Activated CD4-positive, alpha-beta T cell treated with anti-CD3 and anti-CD28 coated beads, Interleukin-2, amount 10 ng/mL, durations not matched to agents 24 days and 14 days (primary cell): ENCODE measurements at regions of chr4 and their contacts with region 1.

Region 1: GRCh38 chr4:77819843-77820648 is 878 bp upstream of the CNOT6L start:
- DNase-seq: peak; percentile 98
- H3K4me3 Mint-ChIP-seq: peak overlapping the region; percentile 97
- H3K27ac Mint-ChIP-seq: peak overlapping the region; percentile 100
- H3K4me1 Mint-ChIP-seq: peaks cover 38% of the 10 kb centered on the region
- H3K27me3 Mint-ChIP-seq: peaks cover 1% of the 10 kb centered on the region

Region 2: GRCh38 chr4:77385124-77385969 is 434.7 kb before region 1 on chr4:
- intact Hi-C with region 1: no loop called
- DNase-seq: peak; percentile 86
- H3K4me3 Mint-ChIP-seq: no peak overlapping the region
- H3K27ac Mint-ChIP-seq: no peak overlapping the region
- H3K4me1 Mint-ChIP-seq: peaks cover 6% of the 10 kb centered on the region
- H3K27me3 Mint-ChIP-seq: peaks cover 4% of the 10 kb centered on the region

Region 3: GRCh38 chr4:77734928-77735327 is 85.1 kb before region 1 on chr4:
- intact Hi-C with region 1: loop called (anchors 2 kb)
- DNase-seq: peak; percentile 85
- H3K4me3 Mint-ChIP-seq: peak overlapping the region; percentile 79
- H3K27ac Mint-ChIP-seq: peak overlapping the region; percentile 79
- H3K4me1 Mint-ChIP-seq: peaks cover 55% of the 10 kb centered on the region
- H3K27me3 Mint-ChIP-seq: no peaks in the 10 kb centered on the region

Region 4: GRCh38 chr4:77843628-77844027 is 23.6 kb after region 1 on chr4:
- intact Hi-C with region 1: loop called (anchors 1 kb)
- DNase-seq: no peak
- H3K4me3 Mint-ChIP-seq: peak overlapping the region; percentile 1
- H3K27ac Mint-ChIP-seq: peak overlapping the region; percentile 86
- H3K4me1 Mint-ChIP-seq: peaks cover 29% of the 10 kb centered on the region
- H3K27me3 Mint-ChIP-seq: no peaks in the 10 kb centered on the region

Region 5: GRCh38 chr4:77862478-77863216 is 42.6 kb after region 1 on chr4 and contains the start of gene MRPL1:
- intact Hi-C with region 1: loop called (anchors 1 kb)
- DNase-seq: peak; percentile 96
- H3K4me3 Mint-ChIP-seq: peak within 1 kb of the TSS; percentile 98
- H3K27ac Mint-ChIP-seq: peak within 1 kb of the TSS; percentile 100
- H3K4me1 Mint-ChIP-seq: peaks cover 47% of the 10 kb centered on the region
- H3K27me3 Mint-ChIP-seq: peaks cover 4% of the 10 kb centered on the region
- total RNA-seq, gene MRPL1: 65.0 and 72.7 TPM in 2 replicates

Region 6: GRCh38 chr4:78056265-78057129 is 236.5 kb after region 1 on chr4:
- intact Hi-C with region 1: loop called (anchors 5 kb)
- DNase-seq: peak; percentile 74
- H3K4me3 Mint-ChIP-seq: peak overlapping the region; percentile 88
- H3K27ac Mint-ChIP-seq: no peak overlapping the region
- H3K4me1 Mint-ChIP-seq: peaks cover 26% of the 10 kb centered on the region
- H3K27me3 Mint-ChIP-seq: peaks cover 71% of the 10 kb centered on the region